GM12878 (cell line): ENCODE measurements at regions of chr5 and their contacts with region 1.

Region 1: DNA sequence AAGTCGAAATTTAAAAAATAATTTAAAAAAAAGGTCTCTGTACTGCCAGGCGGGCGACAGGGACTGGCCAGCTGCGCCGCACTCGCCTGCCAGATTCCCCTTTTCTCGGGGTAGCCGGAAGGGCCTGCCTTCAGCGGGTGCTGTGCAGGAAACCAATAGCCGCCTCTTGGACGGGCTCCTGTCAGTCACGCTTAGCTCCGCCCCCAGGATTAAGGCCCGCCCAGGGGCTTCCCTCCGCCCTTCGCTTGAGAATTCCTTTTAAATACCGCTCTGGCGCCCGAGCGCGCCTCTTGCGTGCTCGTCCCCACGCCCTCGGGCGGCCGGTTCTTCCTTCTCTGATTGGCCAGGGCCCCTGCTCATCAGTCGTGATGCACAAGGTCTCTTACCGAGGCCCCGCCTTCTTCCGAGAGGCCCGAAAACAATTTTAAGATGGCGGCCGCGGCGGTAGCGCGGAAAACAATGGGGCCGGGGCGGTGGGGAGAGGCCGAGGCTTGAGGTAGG is at the start of gene MAML1:
- DNase-seq: peak; percentile 98
- ATAC-seq: peak; percentile 97
- H3K4me3 ChIP-seq: peak within 1 kb of the TSS; percentile 84
- H3K27ac ChIP-seq: peak within 1 kb of the TSS; percentile 83
- H3K4me1 ChIP-seq: peaks cover 6% of the 10 kb centered on the region; the same call in 1 of the 2 replicates
- H3K27me3 ChIP-seq: no peaks in the 10 kb centered on the region
- CTCF ChIP-seq: no peak
- EP300 ChIP-seq: no peak
- POLR2A ChIP-seq: peak; percentile 83
- RAD21 ChIP-seq: no peak
- polyA plus RNA-seq, gene MAML1: 0.42 to 1.2 TPM

Region 2: GRCh38 chr5:179678223-179679013 is 54.0 kb before region 1 on chr5:
- CTCF ChIA-PET with region 1: interaction called, 9 read pairs
- POLR2A ChIA-PET with region 1: interaction called, 11 read pairs
- RAD21 ChIA-PET with region 1: interaction called, 4 read pairs
- SMC1A ChIA-PET with region 1: interaction called, 12 read pairs
- in situ Hi-C with region 1: no loop called
- intact Hi-C with region 1: no loop called
- DNase-seq: peak; percentile 86
- ATAC-seq: peak; percentile 92
- H3K4me3 ChIP-seq: peak overlapping the region; percentile 76
- H3K27ac ChIP-seq: peak overlapping the region; percentile 94
- H3K4me1 ChIP-seq: peaks cover 11% of the 10 kb centered on the region
- H3K27me3 ChIP-seq: no peaks in the 10 kb centered on the region
- CTCF ChIP-seq: peak in 1 of 3 experiments; percentile 21; a peak in 1 of 6 replicates
- EP300 ChIP-seq: no peak
- POLR2A ChIP-seq: peak; percentile 99
- RAD21 ChIP-seq: no peak

Region 3: DNA sequence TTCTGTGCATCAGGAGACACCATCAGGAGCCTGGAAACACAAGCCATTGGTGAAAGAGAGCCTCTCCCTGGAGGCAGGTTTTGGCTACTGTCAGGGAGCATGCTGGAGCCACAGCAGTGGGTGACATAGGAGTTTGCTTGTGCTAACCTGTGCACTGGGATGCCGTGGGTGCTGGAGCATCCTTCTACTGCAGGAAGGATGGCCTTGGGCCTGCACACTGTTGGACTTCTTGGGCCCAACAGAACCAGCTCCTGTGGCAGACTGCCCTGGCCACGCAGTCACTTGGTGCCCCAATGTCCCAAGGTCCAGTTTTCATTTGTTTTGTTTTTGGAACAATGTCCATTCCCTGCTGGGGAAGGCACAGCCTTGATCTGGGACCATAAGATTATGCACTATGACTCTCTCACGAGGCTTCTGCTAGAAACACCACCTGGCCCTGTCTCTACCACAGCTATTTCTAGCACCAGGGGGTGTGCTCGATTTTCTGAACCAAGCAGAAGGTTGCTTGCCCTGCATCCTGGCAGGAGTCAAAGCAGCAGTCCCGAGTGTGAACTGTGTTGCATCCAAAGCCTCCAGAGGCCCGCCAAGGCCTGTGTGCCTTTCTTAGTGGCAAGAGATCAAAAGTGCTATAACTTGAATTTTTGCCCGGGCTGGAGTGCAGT is 55.9 kb after region 1 on chr5:
- CTCF ChIA-PET with region 1: no interaction called
- POLR2A ChIA-PET with region 1: no interaction called
- RAD21 ChIA-PET with region 1: no interaction called
- SMC1A ChIA-PET with region 1: no interaction called
- in situ Hi-C with region 1: no loop called
- intact Hi-C with region 1: no loop called
- DNase-seq: no peak
- ATAC-seq: no peak
- H3K4me3 ChIP-seq: no peak overlapping the region
- H3K27ac ChIP-seq: no peak overlapping the region
- H3K4me1 ChIP-seq: 0 out of 2 replicates have a peak, but pooled peaks cover 1% of the 10 kb centered on the region
- H3K27me3 ChIP-seq: no peaks in the 10 kb centered on the region
- CTCF ChIP-seq: no peak
- EP300 ChIP-seq: no peak
- POLR2A ChIP-seq: no peak
- RAD21 ChIP-seq: no peak

Region 4: GRCh38 chr5:179875741-179876609 is 143.5 kb after region 1 on chr5:
- CTCF ChIA-PET with region 1: no interaction called
- POLR2A ChIA-PET with region 1: interaction called, 10 read pairs
- RAD21 ChIA-PET with region 1: no interaction called
- SMC1A ChIA-PET with region 1: no interaction called
- in situ Hi-C with region 1: no loop called
- intact Hi-C with region 1: no loop called
- DNase-seq: no peak
- ATAC-seq: no peak
- H3K4me3 ChIP-seq: no peak overlapping the region
- H3K27ac ChIP-seq: no peak overlapping the region
- H3K4me1 ChIP-seq: no peaks in the 10 kb centered on the region
- H3K27me3 ChIP-seq: no peaks in the 10 kb centered on the region
- CTCF ChIP-seq: no peak
- EP300 ChIP-seq: no peak
- POLR2A ChIP-seq: no peak
- RAD21 ChIP-seq: no peak